Activated CD4-positive, alpha-beta memory T cell treated with anti-CD3 and anti-CD28 coated beads for 36 hours (primary cell): ENCODE measurements at regions of chr7 and their contacts with region 1.

Region 1: GRCh38 chr7:130961128-130961601 is 227.2 kb upstream of the KLF14 start:
- DNase-seq: peak; percentile 93
- H3K4me3 Mint-ChIP-seq: peak overlapping the region; percentile 84
- H3K27ac Mint-ChIP-seq: no peak overlapping the region
- H3K4me1 Mint-ChIP-seq: peaks cover 43% of the 10 kb centered on the region
- H3K27me3 Mint-ChIP-seq: peaks cover 6% of the 10 kb centered on the region

Region 2: GRCh38 chr7:130912862-130913631 is 48.1 kb before region 1 on chr7:
- CTCF ChIA-PET with region 1: no interaction called
- POLR2A ChIA-PET with region 1: interaction called, 32 read pairs
- intact Hi-C with region 1: loop called (anchors 1 kb)
- DNase-seq: peak; percentile 93
- H3K4me3 Mint-ChIP-seq: peak overlapping the region; percentile 83
- H3K27ac Mint-ChIP-seq: peak overlapping the region; percentile 94
- H3K4me1 Mint-ChIP-seq: peaks cover 91% of the 10 kb centered on the region
- H3K27me3 Mint-ChIP-seq: no peaks in the 10 kb centered on the region

Region 3: GRCh38 chr7:130982160-130982638 is 21.0 kb after region 1 on chr7:
- CTCF ChIA-PET with region 1: interaction called, 18 read pairs
- POLR2A ChIA-PET with region 1: interaction called, 67 read pairs
- intact Hi-C with region 1: no loop called
- DNase-seq: peak; percentile 48
- H3K4me3 Mint-ChIP-seq: no peak overlapping the region
- H3K27ac Mint-ChIP-seq: no peak overlapping the region
- H3K4me1 Mint-ChIP-seq: peaks cover 59% of the 10 kb centered on the region
- H3K27me3 Mint-ChIP-seq: no peaks in the 10 kb centered on the region

Region 4: DNA sequence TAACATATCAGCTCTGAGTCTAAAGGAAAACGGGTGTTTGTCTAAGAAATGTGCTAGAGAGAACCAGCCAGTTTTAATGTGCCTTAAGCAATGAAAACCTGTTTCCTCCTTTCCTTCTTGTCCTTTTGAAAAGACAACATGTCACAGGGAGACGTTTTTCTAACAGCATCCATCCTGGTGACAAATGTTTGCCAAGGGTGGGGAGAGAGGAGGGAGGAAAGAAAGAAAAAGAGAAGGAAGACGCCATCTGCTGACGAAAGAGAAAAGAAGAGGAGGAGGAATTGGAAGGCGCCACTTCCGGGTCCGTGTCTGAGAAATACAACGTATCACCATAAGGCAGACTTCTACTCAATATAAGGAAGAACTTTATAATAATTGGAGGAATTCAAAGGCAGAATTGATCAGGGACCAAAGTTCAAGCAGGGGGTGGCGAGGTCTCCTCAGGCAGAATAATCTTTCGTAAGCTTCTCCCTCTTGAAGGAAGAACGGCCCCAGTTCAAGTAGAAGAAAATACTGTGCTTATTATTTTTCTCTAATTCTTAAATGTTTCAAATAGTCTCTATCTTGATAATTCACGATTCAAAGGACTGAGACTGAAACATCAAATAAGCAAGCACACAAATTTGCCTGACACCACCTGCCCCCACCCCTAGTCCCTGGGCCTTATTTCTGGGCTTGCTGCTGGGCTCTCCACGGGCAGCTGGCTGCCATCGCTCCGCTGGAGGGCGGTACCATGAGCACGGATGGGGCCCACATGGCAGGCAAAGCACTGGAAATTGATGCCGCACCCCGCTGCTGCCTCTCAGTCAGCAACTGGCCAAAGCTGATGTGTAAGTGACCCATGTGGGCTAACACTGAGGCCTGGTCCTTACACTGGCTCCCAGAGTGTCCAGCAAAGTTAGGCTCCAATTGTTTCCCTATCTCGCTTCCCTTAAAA is 46.5 kb after region 1 on chr7:
- CTCF ChIA-PET with region 1: interaction called, 5 read pairs
- POLR2A ChIA-PET with region 1: interaction called, 97 read pairs
- intact Hi-C with region 1: loop called (anchors 1 kb)
- DNase-seq: peak; percentile 76
- H3K4me3 Mint-ChIP-seq: peak overlapping the region; percentile 55
- H3K27ac Mint-ChIP-seq: peak overlapping the region; percentile 98
- H3K4me1 Mint-ChIP-seq: peaks cover 88% of the 10 kb centered on the region
- H3K27me3 Mint-ChIP-seq: no peaks in the 10 kb centered on the region

Region 5: GRCh38 chr7:131040467-131040932 is 79.3 kb after region 1 on chr7:
- CTCF ChIA-PET with region 1: interaction called, 34 read pairs
- POLR2A ChIA-PET with region 1: interaction called, 3 read pairs
- intact Hi-C with region 1: no loop called
- DNase-seq: peak; percentile 59
- H3K4me3 Mint-ChIP-seq: no peak overlapping the region
- H3K27ac Mint-ChIP-seq: peak overlapping the region; percentile 78
- H3K4me1 Mint-ChIP-seq: peaks cover 71% of the 10 kb centered on the region
- H3K27me3 Mint-ChIP-seq: no peaks in the 10 kb centered on the region

Region 6: DNA sequence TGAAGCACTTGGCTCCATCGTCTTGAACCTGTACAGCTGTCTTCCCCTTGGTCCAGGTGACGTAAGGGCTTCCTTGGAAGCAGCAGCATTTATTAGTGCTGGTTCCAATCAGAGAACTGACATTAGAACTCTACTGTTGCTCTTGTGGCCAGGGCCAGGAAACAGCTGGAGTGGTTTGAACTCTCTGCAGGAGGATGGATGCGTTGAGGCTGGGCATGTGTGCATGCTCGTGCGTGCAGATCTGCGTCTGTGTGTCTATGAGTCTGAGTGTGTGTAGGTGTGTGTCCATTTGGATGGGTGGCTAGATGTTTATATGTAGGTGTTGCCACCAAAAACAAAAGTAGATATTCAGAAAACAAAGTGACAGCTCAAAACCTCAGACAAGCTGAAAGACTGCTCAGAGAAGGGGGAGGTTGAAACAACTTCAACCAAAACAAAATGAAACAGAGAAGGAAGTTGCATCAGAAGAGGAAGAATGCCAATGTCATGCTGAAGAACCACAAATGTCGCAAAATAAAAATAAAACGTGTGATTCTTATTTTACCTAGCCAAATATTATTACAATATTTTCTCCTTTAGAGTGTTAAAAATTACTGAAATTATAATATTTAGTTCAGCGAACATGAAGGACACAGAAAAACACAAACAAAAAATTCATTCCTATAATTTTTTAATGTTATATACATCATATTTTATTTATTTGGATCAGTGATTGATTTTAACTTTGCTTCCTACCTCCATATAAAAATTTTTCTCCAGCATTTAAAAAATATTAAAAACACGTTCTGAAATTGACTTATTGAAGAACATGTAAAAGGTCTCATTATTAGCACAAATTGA is 270.4 kb after region 1 on chr7:
- CTCF ChIA-PET with region 1: no interaction called
- POLR2A ChIA-PET with region 1: no interaction called
- intact Hi-C with region 1: loop called (anchors 5 kb)
- DNase-seq: peak; percentile 81
- H3K4me3 Mint-ChIP-seq: peak overlapping the region; percentile 64
- H3K27ac Mint-ChIP-seq: peak overlapping the region; percentile 88
- H3K4me1 Mint-ChIP-seq: peaks cover 48% of the 10 kb centered on the region
- H3K27me3 Mint-ChIP-seq: no peaks in the 10 kb centered on the region